ENCODE measurements at regions of chr2 and their contacts with region 1.

Region 1: DNA sequence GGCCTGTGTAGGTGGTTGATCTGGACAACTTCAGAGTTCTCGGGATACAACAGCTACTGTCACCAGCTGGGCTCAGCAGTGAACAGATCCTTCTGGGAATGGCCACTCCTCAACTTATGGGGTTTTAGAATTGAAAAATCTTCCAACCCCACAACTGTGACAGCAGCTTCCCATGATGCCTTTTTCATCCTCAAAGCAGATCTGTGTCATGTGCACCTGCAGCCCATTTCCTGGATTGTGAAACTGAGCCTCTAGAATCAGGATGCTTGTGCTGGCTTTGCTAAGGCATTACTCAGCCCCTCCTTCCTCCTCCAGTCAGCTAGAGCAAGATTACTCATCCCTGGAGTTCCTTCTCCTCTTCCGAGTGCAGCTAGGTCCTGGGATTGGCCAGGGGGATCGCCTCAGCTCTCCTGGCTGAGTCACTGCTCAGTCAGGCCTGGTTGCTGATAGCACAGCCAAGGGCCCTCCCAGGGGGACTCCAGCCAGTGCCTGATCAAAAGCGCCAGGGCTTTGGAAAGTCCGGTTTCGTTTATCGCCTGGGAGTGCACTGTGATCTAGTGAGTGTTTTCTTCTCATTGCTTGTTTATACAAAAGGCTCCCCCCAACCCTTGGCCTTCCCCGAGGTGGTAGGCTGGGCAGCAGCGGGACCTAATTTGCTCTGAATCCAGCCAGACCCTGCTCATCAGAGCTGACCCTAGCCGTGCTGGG is 2.4 kb upstream of the LPIN1 start:
- DNase-seq: peak; percentile 98
- H3K4me3 ChIP-seq: peak overlapping the region; percentile 40
- CTCF ChIP-seq: no peak

Region 2: DNA sequence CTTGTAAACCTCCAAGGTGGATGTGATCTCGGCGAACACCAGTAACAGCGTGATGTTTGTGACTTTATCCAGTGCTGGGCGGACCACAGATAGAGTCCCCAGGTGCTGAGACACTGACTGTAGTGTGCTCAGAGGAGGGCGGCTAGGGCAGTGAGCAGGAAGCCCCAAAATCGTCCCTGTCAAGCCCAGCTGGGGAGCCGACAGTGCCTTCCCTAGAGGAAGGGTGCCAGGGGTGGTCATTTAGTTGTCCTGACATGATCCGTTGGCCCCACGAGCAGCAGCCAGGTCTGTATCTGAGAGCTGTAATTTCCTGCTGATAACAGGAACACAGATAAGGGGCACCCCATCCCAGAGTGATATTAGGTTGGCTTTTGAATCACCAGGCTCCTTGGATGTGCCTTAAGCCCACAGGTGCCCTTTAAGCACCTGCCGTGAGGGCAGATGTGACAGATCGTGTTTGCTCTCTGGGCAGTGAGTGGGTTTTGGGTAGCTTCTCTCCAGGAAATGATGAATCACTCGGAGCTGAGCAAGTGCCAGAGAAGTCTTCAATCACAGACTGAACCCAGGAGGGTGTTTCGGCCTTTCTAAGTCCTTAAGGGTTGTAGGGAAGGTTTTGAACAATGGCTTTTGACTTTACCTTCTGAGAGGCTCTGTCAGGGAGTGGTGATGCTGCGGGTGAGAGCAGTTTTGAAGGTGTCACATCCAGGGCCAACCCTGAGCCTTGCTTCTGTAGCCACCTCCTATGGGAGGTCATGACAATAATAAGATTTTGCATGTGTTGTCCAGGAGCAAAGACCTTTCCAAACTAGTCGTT is 10.1 kb after region 1 on chr2:
- CTCF ChIA-PET with region 1: interaction called, 19 read pairs
- POLR2A ChIA-PET with region 1: interaction called, 3 read pairs
- DNase-seq: no peak
- H3K4me3 ChIP-seq: no peak overlapping the region
- CTCF ChIP-seq: no peak

Region 3: DNA sequence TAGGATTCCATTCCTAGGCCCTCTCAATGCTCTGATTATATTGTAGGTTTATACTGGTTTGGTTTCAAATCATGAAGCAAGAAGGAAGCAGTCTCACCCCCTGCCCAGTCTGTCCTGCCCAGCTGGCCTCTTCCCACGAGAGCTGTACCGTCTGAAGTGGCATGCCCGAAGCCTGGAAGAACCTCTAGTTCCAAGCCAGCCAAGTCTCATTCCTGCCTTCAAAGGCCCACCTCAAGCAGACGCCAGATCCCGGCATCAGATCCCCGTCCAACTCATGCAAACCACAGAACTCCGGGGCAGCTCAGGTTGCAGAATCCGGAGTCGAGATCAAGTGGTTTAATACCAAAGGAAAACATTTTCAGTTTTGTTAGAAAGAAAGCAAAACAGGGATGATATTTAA is 236.8 kb after region 1 on chr2:
- CTCF ChIA-PET with region 1: no interaction called
- POLR2A ChIA-PET with region 1: no interaction called
- DNase-seq: no peak
- H3K4me3 ChIP-seq: no peak overlapping the region
- CTCF ChIP-seq: no peak

Measured in AG04449 (cell line).